ENCODE measurements at regions of chr1 and their contacts with region 1.

Region 1: GRCh38 chr1:83761167-83762038 is 237.5 kb downstream of the TTLL7 start:
- DNase-seq: peak; percentile 52
- ATAC-seq: peak; percentile 99
- H3K4me3 Mint-ChIP-seq: peak overlapping the region; percentile 39
- H3K27ac Mint-ChIP-seq: peak overlapping the region; percentile 75
- H3K4me1 Mint-ChIP-seq: peaks cover 37% of the 10 kb centered on the region
- H3K27me3 Mint-ChIP-seq: no peaks in the 10 kb centered on the region
- CTCF ChIP-seq: no peak

Region 2: DNA sequence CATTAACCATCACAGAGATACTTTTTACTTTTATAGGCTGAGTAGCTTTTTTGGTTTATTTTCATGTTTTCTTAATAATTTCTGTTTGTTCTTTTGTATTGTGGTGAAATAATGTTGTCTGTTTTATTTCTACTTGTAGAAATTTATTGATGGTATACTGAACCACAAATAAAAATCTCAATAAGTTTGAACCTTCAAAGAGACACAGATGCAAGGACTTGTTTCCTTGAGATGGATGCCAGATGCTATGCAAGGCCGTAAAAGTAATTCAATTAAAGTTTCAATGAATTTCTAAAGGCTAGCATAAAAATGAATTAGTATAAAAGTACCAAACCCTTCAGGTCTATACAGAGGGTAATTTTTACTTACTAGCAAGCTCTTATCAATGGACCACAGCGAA is 635.9 kb before region 1 on chr1:
- CTCF ChIA-PET with region 1: no interaction called
- POLR2A ChIA-PET with region 1: no interaction called
- intact Hi-C with region 1: loop called (anchors 10 kb)
- DNase-seq: no peak
- ATAC-seq: no peak
- H3K4me3 Mint-ChIP-seq: no peak overlapping the region
- H3K27ac Mint-ChIP-seq: no peak overlapping the region
- H3K4me1 Mint-ChIP-seq: no peaks in the 10 kb centered on the region
- H3K27me3 Mint-ChIP-seq: no peaks in the 10 kb centered on the region
- CTCF ChIP-seq: no peak

Region 3: GRCh38 chr1:83692524-83693381 is 68.7 kb before region 1 on chr1:
- CTCF ChIA-PET with region 1: no interaction called
- POLR2A ChIA-PET with region 1: interaction called, 3 read pairs
- intact Hi-C with region 1: loop called (anchors 5 kb)
- DNase-seq: no peak
- ATAC-seq: peak; percentile 63
- H3K4me3 Mint-ChIP-seq: peak overlapping the region; percentile 85
- H3K27ac Mint-ChIP-seq: peak overlapping the region; percentile 73
- H3K4me1 Mint-ChIP-seq: peaks cover 51% of the 10 kb centered on the region
- H3K27me3 Mint-ChIP-seq: peaks cover 4% of the 10 kb centered on the region
- CTCF ChIP-seq: no peak

Region 4: DNA sequence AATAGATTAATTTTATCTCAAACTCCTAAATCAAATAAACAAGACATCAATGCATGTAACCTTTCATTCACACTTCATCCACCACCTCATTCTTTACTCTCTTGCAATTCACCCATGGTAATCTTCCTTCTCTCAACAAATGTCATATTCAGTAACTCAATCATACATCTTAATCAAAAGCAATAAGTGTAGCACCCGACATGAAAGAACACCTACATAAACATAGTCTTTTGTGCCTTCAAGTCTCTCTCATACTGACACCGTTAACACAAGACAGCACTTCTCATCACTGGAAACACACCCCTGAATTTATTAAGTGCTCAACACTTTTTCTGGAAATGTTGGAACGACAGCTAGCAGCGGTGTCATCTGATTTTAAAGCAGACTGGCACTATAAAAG is 11.7 kb after region 1 on chr1:
- CTCF ChIA-PET with region 1: no interaction called
- POLR2A ChIA-PET with region 1: no interaction called
- intact Hi-C with region 1: loop called (anchors 1 kb)
- DNase-seq: no peak
- ATAC-seq: no peak
- H3K4me3 Mint-ChIP-seq: no peak overlapping the region
- H3K27ac Mint-ChIP-seq: no peak overlapping the region
- H3K4me1 Mint-ChIP-seq: peaks cover 21% of the 10 kb centered on the region
- H3K27me3 Mint-ChIP-seq: no peaks in the 10 kb centered on the region
- CTCF ChIP-seq: no peak

Region 5: GRCh38 chr1:85048296-85049064 is 1287.1 kb after region 1 on chr1 and contains the start of gene MCOLN3:
- CTCF ChIA-PET with region 1: no interaction called
- POLR2A ChIA-PET with region 1: no interaction called
- intact Hi-C with region 1: loop called (anchors 10 kb)
- DNase-seq: peak; percentile 42
- ATAC-seq: peak; percentile 69
- H3K4me3 Mint-ChIP-seq: peak within 1 kb of the TSS; percentile 76
- H3K27ac Mint-ChIP-seq: no peak within 1 kb of the TSS
- H3K4me1 Mint-ChIP-seq: peaks cover 8% of the 10 kb centered on the region
- H3K27me3 Mint-ChIP-seq: peaks cover 41% of the 10 kb centered on the region
- CTCF ChIP-seq: no peak
- total RNA-seq, gene MCOLN3: 0.16 TPM in 1 of 2 replicates, not detected in the other